Right ventricle myocardium inferior (tissue), 1 donor: ENCODE measurements at regions of chr6 and their contacts with region 1.

Region 1: DNA sequence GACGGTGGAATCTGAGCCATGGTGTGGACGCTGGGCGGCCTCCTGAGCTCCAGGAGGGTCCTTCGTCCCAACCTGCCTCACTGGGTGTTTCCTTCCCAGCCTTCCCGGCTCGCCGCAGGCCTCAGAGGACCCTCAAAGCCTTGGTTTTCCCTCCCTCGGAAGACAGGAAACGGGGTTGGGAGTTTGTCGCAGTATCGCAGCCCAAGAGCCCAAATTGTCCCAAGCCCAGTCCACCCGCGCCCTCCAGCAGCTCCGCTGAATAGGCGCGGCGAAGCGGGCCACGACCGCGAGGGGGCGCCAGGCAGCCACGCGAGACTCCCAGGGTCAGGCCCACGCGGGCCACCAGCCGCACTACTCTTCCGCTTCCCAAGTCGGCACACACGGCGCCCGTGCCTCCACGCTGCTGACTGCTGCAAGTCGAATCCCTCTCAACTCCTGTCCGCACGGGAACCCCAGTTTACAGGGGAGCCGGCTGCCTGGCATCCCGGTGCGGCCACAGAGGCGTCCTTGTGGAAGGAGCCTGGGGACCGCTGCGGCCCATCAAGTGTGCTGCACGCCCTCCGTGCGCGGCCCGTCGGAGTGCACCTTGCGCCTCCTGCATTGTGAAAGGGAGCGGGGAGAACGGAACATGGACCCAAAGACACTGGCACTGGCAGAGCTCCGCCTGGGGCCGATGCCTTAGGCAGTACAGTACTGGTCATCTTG is 40.4 kb upstream of the HMGA1 start:
- DNase-seq: peak; percentile 97
- ATAC-seq: peak; percentile 99

Region 2: GRCh38 chr6:34237722-34238584 is 41.7 kb after region 1 on chr6:
- intact Hi-C with region 1: loop called (anchors 2 kb)
- DNase-seq: peak; percentile 75
- ATAC-seq: no peak

Region 3: GRCh38 chr6:34248727-34249551 is 52.7 kb after region 1 on chr6 and contains the start of gene SMIM29:
- intact Hi-C with region 1: loop called (anchors 2 kb)
- DNase-seq: peak; percentile 98
- ATAC-seq: peak; percentile 94
- total RNA-seq, gene SMIM29: 20.7 TPM

Region 4: GRCh38 chr6:34414999-34415858 is 219.0 kb after region 1 on chr6:
- intact Hi-C with region 1: loop called (anchors 1 kb)
- DNase-seq: no peak
- ATAC-seq: peak; percentile 94

Region 5: DNA sequence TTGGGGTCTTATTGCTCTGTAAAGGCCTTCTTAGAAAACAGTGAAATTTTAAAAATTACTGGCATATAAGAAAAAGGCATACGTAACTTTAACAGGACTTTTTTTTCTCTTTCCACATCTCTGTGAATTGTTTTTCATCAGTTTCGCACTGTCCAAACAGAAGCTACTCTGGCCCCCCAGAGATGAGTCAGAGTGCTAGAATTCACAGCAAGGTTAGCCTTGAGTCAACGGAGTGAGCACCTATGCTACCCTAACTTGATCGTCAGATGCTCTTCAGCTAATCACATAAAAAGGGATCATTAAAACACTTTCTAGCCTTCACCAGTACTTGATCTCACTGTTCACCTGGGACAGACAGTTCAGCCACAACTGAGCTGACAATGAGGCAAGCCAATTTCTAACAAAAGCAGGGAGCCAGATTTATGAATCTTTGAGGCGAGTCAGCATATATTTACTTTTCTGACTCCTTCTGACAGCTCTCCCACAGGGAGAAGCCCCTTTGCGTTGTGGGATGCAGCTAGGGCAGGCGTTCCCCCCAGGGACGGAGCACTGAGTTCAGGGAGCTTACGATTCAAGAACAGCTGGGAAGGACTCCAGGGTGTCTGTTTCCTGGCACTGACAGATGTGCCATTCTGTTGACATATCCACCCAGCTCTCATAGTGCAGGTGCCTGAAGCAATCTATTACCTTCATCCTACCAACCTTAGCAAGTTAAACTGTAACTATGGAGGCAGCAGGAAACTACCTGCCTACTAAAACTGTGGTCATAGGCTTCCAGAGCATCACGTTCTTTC is 406.2 kb after region 1 on chr6:
- intact Hi-C with region 1: loop called (anchors 10 kb)
- DNase-seq: no peak
- ATAC-seq: peak; percentile 26